ENCODE measurements at regions of chr10 and their contacts with region 1.

Region 1: DNA sequence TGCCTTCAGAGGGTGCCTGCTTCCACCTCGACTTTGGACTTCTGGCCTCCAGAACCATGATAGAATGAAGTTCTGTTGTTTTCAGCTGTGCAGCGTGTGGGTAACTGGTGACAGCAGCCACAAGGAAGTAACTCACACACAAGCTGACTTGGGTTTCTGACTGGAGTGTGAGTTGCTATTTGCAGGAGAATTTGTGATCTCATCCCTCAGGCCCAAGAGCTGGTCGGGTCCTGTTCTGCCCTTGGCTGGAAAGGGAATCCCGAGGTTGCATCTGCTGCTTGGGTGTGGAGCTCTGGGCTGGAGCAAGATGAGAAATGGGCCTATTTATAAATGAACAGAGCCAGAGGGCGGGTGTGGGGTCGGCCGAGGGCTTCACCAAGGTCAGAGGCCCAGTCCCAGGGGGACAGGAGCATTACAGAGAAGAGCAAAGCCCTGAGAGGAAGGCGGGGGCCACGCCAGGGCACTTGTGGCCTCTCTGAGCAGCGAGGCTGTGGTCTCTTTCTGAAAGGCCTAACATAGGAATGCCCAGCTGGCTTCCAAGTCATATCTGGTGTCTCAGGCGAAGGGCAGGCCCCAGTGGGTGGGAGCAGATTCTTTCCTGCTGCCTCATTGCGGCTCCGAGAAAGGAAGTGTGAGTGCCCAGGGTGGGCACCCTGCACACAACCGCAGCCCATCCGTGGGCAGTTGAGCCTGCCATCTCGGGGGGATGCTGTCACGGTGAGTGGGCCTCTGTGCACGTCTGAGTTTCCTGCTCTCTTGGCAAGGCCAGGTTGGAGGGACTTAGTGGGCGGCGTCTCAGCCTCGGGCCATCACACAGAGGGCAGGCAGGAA is 26.5 kb upstream of the C10orf71 start:
- DNase-seq: peak; percentile 66 to 90
- ATAC-seq: peak; percentile 87 to 92 (median 88)
- H3K4me3 ChIP-seq: peak overlapping the region; percentile 28
- H3K27ac ChIP-seq: peak overlapping the region; percentile 99
- H3K4me1 ChIP-seq: peaks cover 40% of the 10 kb centered on the region
- H3K27me3 ChIP-seq: no peaks in the 10 kb centered on the region
- CTCF ChIP-seq: no peak

Region 2: DNA sequence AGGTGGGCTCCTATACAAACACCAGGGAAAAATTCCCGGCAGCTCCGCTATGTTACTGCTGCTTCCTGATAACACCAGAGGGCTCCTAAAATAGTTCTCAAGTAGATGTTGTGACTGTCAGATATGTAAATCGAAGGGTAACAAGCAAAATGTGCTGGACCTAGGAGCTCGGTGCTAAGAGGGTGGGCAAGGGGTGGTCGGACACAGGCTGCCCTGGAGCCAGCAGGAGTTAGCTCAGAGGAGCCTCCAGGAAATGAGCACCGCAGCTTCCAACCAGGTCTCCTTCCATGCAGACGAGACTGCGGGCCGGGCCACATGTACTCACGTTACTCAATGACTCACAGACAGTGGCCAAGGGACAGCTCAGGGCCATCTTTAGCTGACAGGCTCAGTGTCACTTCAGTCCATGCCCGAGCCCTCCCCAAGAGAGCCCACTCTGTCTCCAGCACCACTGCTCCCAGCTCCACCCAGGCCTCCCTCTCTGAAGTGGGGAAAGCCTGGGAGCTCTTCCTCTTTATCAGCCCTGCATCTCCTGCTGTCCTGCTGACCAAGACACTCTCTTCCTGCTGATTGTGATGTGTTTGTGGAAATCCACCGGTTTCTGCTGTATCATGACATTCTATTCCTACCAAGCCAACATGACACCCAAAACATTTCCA is 47.1 kb before region 1 on chr10:
- intact Hi-C with region 1: loop called in 1 of 2 experiments (anchors 5 kb)
- DNase-seq: peak; percentile 49 to 77
- ATAC-seq: peak; percentile 96 to 99 (median 98)
- H3K4me3 ChIP-seq: no peak overlapping the region
- H3K27ac ChIP-seq: peak overlapping the region; percentile 51
- H3K4me1 ChIP-seq: peaks cover 6% of the 10 kb centered on the region
- H3K27me3 ChIP-seq: no peaks in the 10 kb centered on the region
- CTCF ChIP-seq: no peak